ENCODE measurements at regions of chr6 and their contacts with region 1.

Region 1: GRCh38 chr6:142845624-142846458 is 99.1 kb downstream of the HIVEP2 start:
- DNase-seq: peak; percentile 59
- H3K4me3 Mint-ChIP-seq: peak overlapping the region; percentile 66
- H3K27ac Mint-ChIP-seq: peak overlapping the region; percentile 89
- H3K4me1 Mint-ChIP-seq: peaks cover 95% of the 10 kb centered on the region
- H3K27me3 Mint-ChIP-seq: no peaks in the 10 kb centered on the region

Region 2: DNA sequence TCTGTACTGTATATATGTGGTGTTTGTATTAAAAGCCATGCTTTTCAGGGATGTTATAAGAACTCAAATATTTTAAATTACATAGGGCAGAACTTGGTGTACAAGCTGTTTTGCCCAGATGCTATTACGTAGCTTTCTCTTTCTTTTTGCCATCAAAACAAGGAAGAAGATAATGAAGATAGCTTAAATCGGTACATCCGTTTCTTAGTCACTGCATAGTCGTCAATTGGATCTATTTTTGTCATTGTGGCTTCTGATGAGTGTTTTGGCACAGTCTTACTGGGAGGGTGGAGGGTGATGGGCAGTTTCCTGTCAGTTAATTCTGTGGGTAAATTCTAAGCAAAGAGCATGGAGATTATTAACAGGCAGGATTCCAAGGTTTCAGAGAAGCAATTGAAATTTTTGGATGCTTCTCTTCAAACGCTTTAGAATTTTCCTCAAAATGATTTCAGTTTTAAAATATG is 1362.2 kb before region 1 on chr6:
- CTCF ChIA-PET with region 1: no interaction called
- intact Hi-C with region 1: loop called (anchors 5 kb)
- DNase-seq: peak; percentile 70
- H3K4me3 Mint-ChIP-seq: peak overlapping the region; percentile 65
- H3K27ac Mint-ChIP-seq: peak overlapping the region; percentile 91
- H3K4me1 Mint-ChIP-seq: peaks cover 33% of the 10 kb centered on the region
- H3K27me3 Mint-ChIP-seq: no peaks in the 10 kb centered on the region

Region 3: GRCh38 chr6:142802124-142802523 is 43.7 kb before region 1 on chr6:
- CTCF ChIA-PET with region 1: no interaction called
- intact Hi-C with region 1: loop called (anchors 1 kb)
- DNase-seq: peak; percentile 73
- H3K4me3 Mint-ChIP-seq: no peak overlapping the region
- H3K27ac Mint-ChIP-seq: peak overlapping the region; percentile 88
- H3K4me1 Mint-ChIP-seq: peaks cover 94% of the 10 kb centered on the region
- H3K27me3 Mint-ChIP-seq: no peaks in the 10 kb centered on the region

Region 4: DNA sequence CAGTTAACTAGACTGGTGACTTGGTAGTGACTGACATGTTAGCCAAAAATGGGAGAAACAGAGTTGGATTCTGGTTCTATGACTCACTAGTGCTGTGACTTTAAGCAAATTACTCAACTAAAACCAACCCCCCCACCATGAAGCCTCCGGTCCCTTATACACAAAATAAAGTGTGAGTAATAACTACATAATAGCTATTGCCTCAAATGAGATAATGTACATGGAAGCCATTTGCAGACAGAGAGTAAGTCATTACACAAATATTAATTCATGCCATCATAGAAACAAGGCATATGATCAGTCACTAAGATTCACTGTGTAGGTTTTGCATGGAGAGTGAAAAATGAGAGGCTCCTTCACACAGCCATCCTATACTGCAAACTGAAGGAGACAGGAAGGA is 12.8 kb before region 1 on chr6:
- CTCF ChIA-PET with region 1: interaction called, 5 read pairs
- intact Hi-C with region 1: loop called (anchors 1 kb)
- DNase-seq: peak; percentile 75
- H3K4me3 Mint-ChIP-seq: no peak overlapping the region
- H3K27ac Mint-ChIP-seq: peak overlapping the region; percentile 81
- H3K4me1 Mint-ChIP-seq: peaks cover 84% of the 10 kb centered on the region
- H3K27me3 Mint-ChIP-seq: no peaks in the 10 kb centered on the region

Region 5: DNA sequence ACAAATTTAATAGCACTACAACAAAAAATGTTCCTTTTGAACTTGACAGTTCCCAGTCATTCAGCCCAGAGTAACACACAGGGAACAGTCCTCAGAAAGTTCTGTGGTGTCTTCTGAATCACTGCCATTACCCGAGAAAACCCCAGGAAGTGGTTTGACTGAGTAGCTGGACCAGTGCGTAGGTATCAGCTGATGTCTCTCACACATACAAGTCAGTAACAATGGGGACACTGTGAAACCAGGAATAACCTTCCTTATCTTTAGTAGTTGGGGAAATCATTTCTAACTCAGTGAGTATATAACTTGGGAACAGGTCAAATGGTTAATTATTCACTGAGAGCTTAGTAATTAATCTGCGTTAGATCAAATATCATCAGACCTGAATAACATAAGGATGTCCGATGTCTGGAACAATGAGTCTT is 26.1 kb after region 1 on chr6:
- CTCF ChIA-PET with region 1: interaction called, 4 read pairs
- intact Hi-C with region 1: loop called (anchors 1 kb)
- DNase-seq: peak; percentile 83
- H3K4me3 Mint-ChIP-seq: peak overlapping the region; percentile 33
- H3K27ac Mint-ChIP-seq: peak overlapping the region; percentile 84
- H3K4me1 Mint-ChIP-seq: peaks cover 83% of the 10 kb centered on the region
- H3K27me3 Mint-ChIP-seq: no peaks in the 10 kb centered on the region

Region 6: DNA sequence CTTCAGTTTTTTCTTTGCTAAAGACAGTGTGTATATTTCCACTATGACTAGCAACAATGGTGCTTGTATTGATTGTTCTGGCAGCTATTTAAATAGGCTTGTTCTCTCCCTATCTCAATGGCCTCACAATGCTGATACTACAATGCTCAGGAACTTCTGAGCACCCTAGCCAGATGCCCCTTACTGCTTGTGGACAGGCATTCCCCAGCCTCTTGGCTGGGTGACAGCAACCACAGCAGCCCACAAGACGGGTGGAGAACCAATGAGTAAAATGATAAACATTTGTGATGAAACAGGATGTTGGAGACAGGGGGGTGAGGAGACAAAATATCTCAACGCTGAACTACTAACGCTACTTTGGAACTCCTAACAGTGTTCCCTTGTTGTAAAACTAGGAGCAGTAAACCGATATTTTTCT is 56.8 kb after region 1 on chr6:
- CTCF ChIA-PET with region 1: interaction called, 4 read pairs
- intact Hi-C with region 1: loop called (anchors 1 kb)
- DNase-seq: peak; percentile 81
- H3K4me3 Mint-ChIP-seq: peak overlapping the region; percentile 55
- H3K27ac Mint-ChIP-seq: peak overlapping the region; percentile 91
- H3K4me1 Mint-ChIP-seq: peaks cover 61% of the 10 kb centered on the region
- H3K27me3 Mint-ChIP-seq: no peaks in the 10 kb centered on the region

Region 7: GRCh38 chr6:143232849-143233248 is 387.0 kb after region 1 on chr6:
- CTCF ChIA-PET with region 1: no interaction called
- intact Hi-C with region 1: no loop called
- DNase-seq: peak; percentile 59
- H3K4me3 Mint-ChIP-seq: no peak overlapping the region
- H3K27ac Mint-ChIP-seq: no peak overlapping the region
- H3K4me1 Mint-ChIP-seq: no peaks in the 10 kb centered on the region
- H3K27me3 Mint-ChIP-seq: no peaks in the 10 kb centered on the region

Region 8: DNA sequence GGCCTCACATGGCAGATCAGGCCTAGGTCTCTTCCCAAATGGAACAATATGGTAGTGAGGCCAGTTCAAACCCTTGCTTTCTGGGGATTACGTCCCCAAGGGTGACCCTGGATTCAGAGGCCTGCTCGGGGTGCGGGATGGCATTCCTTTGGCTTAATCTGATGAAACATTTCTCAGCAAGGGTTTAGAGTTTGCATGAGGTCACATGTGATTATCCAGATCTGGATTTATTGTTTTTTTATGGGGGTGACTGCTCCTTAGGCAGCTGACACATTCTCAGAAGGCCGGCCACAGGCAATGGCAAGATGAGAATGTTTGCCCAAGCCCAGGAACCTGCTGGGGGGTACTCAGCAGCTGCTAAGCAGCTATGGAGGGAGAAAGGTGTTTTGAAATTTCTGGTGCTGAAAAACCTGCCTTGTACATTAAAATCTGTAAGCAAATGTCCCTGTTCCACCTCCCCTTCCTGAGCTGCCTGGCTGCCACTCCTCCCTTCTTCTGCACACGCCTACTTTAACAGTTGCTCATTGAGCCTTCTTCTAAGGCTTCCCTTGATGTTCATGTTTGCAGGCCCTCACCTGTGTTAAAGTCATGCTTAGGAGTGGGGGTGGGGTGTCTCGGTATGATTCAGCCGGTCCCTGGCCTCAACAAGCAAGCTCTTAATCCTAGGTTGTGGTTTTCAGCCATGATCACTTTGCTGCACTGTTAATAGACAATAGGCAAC is 703.5 kb after region 1 on chr6:
- CTCF ChIA-PET with region 1: no interaction called
- intact Hi-C with region 1: loop called (anchors 10 kb)
- DNase-seq: peak; percentile 71
- H3K4me3 Mint-ChIP-seq: no peak overlapping the region
- H3K27ac Mint-ChIP-seq: no peak overlapping the region
- H3K4me1 Mint-ChIP-seq: peaks cover 57% of the 10 kb centered on the region
- H3K27me3 Mint-ChIP-seq: no peaks in the 10 kb centered on the region

Measured in activated naive CD4-positive, alpha-beta T cell treated with anti-CD3 and anti-CD28 coated beads for 36 hours (primary cell).